Prostate gland (tissue), 2 donors: ENCODE measurements at regions of chr11 and their contacts with region 1.

Region 1: GRCh38 chr11:46346886-46347636 is at the start of gene DGKZ:
- DNase-seq: peak; percentile 87
- H3K4me3 ChIP-seq: peak within 1 kb of the TSS; percentile 71
- H3K27ac ChIP-seq: peak within 1 kb of the TSS; percentile 43 to 44
- H3K4me1 ChIP-seq: peaks cover 13% of the 10 kb centered on the region
- H3K27me3 ChIP-seq: no peaks in the 10 kb centered on the region
- CTCF ChIP-seq: peak; percentile 69 to 100 (median 93)
- POLR2A ChIP-seq: peak; percentile 67
- total RNA-seq, gene DGKZ: 53.6 to 95.0 TPM

Region 2: DNA sequence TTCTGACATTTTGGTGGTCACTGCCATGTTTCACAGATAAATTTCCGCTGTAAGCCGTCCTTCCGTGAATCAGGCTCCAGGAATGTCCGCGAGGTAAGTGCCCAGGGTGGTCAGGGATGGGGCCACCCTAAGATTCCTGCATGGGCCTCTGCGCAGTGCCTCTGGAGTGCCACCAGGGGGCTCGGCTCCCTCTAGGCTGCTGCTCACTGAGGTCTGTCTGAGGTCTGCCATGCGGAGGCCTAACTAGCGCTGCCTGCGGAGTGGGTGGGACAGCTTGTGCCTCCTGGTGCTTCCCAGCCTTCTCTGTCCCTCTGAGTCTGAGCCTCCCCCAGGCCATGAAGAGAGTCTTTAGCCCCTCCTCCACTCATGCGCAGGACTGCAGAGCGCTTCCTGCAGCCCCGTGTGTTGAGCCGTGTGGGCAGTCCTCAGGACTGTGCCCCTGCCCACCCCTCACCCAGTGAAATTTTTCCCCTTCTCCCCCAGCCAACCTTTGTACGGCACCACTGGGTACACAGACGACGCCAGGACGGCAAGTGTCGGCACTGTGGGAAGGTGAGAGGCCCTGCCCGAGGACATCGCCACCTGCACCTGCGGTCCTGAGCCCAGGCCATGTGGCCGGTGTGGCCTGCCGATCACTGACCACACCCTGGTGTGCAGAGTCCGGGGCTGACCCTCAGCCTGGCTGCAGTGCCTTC is 22.5 kb after region 1 on chr11:
- intact Hi-C with region 1: loop called (anchors 2 kb)
- DNase-seq: no peak
- H3K4me3 ChIP-seq: no peak overlapping the region
- H3K27ac ChIP-seq: no peak overlapping the region
- H3K4me1 ChIP-seq: no peaks in the 10 kb centered on the region
- H3K27me3 ChIP-seq: no peaks in the 10 kb centered on the region
- CTCF ChIP-seq: peak; percentile 49 to 85 (median 58)
- POLR2A ChIP-seq: no peak